Right ventricle myocardium superior (tissue), 1 donor: ENCODE measurements at regions of chrX and their contacts with region 1.

Region 1: GRCh38 chrX:44872817-44873414 is at the start of gene KDM6A:
- DNase-seq: peak; percentile 98
- ATAC-seq: peak; percentile 91
- total RNA-seq, gene KDM6A: 12.8 TPM

Region 2: GRCh38 chrX:44474410-44474809 is 398.5 kb before region 1 on chrX:
- intact Hi-C with region 1: no loop called
- DNase-seq: no peak
- ATAC-seq: no peak

Region 3: GRCh38 chrX:44989995-44990770 is 117.3 kb after region 1 on chrX:
- intact Hi-C with region 1: no loop called
- DNase-seq: no peak
- ATAC-seq: no peak

Region 4: DNA sequence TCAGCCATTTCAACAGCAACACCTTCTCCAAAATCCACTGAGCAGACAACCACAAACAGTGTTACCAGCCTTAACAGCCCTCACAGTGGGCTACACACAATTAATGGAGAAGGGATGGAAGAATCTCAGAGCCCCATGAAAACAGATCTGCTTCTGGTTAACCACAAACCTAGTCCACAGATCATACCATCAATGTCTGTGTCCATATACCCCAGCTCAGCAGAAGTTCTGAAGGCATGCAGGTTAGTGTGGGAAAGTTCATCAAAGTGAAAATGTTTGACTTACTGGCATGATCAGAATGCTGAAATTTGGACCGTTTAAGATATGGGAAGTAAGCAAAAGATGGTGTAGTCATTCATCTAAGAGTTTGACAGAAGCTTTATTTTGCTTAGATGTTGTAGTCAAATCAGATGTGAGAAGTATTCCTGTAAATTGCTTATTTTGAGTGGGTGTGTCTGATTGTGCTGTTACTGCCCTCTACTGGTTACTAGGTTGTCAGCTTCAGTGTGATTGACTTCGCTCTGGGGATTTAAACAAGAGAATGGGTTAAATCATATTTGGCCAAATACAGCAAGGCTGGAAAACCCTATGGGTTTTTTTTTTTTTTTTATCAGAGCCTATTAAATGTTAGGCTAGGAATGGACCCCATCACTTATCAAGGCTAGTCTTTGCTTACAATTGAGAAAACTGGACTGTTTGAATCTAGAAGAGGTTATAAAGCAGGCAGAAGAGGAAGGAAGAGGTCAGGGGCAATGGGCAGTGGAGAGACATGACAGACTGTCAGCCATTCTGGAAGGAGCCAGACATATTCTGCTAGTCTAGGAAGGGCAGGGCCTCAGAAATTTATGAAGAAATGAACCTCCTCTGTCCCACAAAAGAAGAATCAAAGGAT is 197.4 kb after region 1 on chrX:
- intact Hi-C with region 1: loop called (anchors 10 kb)
- DNase-seq: no peak
- ATAC-seq: peak; percentile 49